OCI-LY7 (cell line): ENCODE measurements at regions of chr9 and their contacts with region 1.

Region 1: DNA sequence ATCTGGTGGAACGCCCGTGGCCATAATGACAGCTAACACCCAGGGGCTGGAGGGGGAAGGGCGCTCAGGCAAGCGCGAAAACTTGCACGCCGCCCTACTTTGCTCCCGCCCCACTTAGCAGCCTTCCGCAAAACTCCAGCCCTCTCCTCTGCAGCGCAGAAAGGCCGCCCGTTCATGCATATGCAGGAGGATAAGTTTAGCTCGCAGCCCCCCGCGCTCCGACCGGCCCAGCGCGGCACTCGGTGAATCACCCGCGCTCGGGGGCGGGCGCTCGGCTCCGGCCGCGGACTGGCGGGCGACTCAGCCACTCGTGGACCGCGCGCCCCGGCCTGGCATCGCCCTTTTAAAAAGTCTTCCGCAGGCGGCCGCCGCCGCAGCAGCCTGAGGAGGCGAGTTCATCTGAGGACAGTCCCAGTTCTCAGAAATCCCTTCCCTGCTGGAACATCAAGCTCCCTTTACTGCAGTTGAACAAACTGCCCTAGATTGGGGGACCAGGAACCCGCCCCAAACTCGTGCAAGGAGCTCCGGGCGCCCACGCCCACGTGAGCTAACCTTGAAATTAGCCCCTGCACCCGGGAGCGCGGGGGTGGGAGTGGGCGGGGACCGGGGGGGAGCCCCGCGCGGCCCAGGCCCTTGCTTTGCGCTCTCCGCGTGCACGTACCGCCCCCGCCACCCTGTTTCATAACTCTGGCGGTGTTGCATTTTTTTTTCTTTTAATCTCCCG is 4.5 kb upstream of the KLF9 start:
- DNase-seq: peak; percentile 83
- H3K4me3 ChIP-seq: peak overlapping the region; percentile 75
- H3K27ac ChIP-seq: peak overlapping the region; percentile 37
- H3K4me1 ChIP-seq: peaks cover 43% of the 10 kb centered on the region
- CTCF ChIP-seq: no peak

Region 2: DNA sequence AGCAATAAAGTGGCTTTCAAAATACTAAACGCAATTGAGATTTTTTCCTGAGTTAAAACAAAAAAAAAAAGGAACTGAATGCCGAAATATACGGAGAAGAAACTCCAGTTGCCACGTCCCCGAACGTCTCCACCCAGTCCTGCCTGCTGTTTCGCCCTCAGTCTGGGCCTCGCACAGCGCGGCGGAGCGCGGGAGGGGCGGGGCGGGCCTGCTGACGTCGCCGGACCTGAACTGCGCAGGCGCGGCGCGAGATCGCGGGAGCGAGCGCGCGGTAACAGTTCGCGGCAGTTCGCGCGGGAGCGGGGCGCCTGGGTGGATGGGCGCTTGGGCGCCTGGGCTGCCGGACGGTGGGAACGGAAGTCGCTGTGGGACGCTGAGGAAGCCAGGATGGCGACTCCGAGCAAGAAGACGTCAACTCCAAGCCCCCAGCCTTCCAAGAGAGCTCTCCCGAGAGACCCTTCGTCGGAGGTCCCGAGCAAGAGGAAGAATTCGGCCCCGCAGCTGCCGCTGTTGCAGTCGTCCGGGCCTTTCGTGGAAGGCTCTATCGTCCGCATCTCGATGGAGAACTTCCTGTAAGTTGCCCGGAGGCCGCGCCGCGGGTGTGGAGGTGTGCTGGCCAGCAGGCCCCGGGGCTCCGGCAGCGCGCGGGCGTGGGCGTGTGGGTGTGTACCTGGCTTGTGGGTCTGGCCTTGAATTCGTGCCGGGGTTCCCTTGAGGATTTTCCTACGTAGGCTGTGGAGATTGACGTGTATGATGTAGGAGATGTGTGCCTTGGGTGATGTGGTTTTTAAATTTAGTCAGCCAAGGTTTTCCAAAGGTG is 160.1 kb before region 1 on chr9 and contains the start of gene SMC5:
- CTCF ChIA-PET with region 1: no interaction called
- POLR2A ChIA-PET with region 1: no interaction called
- intact Hi-C with region 1: loop called (anchors 10 kb)
- DNase-seq: peak; percentile 90
- H3K4me3 ChIP-seq: peak within 1 kb of the TSS; percentile 89
- H3K27ac ChIP-seq: peak within 1 kb of the TSS; percentile 54
- H3K4me1 ChIP-seq: peaks cover 34% of the 10 kb centered on the region
- CTCF ChIP-seq: no peak
- total RNA-seq, gene SMC5: 34.9 and 42.0 TPM in 2 replicates